Adrenal gland (tissue), 19 donors: ENCODE measurements at regions of chr9 and their contacts with region 1.

Region 1: GRCh38 chr9:105064315-105065097 is 136.6 kb upstream of the ABCA1 start:
- DNase-seq: peak; percentile 92 to 99 (median 97)
- H3K4me3 ChIP-seq: peak overlapping the region in 1 of 4 donors; percentile 5
- H3K27ac ChIP-seq: peak overlapping the region; percentile 77 to 98 (median 94)
- H3K4me1 ChIP-seq: peaks cover 24 to 27% of the 10 kb centered on the region in 2 donors
- H3K27me3 ChIP-seq: no peaks in the 10 kb centered on the region
- CTCF ChIP-seq: peak in 2 of 6 experiments; percentile 8 to 29
- POLR2A ChIP-seq: peak; percentile 48 to 93

Region 2: DNA sequence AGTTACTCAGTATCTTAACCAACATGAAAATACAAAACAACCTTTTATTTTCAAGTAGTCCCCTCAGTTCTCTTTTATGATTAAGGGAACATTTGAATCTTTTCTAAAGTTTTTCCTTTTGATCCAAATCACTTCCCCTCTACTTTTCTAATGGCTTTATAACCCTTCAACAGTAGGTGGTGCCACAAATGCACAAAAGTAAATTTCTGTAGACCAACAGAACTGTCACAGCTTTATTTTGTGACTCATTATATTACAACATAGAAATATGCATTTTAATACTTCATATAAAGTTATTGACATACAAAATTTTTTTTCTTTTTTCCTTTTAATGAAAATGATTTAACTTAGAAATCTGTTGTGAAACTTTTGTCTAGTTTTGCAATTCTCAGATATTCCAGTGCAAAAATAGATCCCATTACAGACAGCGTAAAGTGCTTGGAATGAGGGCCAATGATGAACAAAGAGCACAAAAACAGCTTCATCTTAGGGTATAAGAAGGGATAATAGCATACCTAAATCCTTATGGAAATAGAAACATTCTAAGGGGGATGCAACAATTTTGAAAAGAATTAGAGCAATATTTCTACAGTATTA is 283.6 kb before region 1 on chr9:
- intact Hi-C with region 1: no loop called
- DNase-seq: peak in 1 of 7 donors; percentile 27
- H3K4me3 ChIP-seq: peak overlapping the region in 1 of 4 donors; percentile 10
- H3K27ac ChIP-seq: peak overlapping the region in 3 of 5 donors; percentile 7 to 71 (median 62)
- H3K4me1 ChIP-seq: peaks cover 23 to 55% of the 10 kb centered on the region in 2 donors
- H3K27me3 ChIP-seq: no peaks in the 10 kb centered on the region
- CTCF ChIP-seq: peak; percentile 16 to 59 (median 48)
- POLR2A ChIP-seq: no peak

Region 3: DNA sequence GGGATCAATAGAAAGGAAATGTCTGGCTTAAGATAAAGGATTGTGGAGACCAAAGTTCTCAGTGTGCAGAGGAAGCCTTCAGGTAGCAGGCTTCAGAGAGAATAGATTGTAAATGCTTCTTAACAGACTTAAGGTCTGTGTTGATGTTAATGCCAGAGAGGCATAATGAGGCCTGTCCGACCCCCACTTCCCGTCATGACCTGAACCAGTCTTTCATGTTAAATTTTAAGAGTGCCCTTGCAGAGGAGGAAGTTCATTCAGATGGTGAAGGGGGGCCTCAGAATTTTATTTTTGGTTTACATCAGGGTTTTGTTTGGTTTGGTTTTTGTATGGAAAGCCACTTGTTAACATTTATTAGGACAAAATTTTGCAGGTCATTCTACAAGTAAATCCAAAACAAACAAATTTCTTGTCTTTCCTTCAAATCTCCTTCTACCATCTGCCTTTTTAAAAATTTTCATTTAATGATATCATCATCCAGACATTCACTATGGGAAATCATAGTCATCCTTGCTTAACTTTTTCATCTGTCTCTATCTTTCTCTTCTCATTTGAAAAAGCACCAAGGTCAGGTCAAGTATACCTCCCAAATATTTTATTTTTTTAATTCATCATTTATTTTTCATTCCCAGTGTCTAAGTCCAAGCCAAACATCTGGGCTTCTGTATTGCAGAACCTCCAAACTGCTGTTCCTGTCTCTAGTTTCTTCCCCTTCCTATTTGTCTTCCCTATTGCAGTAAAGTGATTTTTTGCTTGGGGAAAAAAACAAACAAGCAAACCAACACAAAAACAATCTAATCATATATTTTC is 129.6 kb before region 1 on chr9:
- intact Hi-C with region 1: loop called in 1 of 2 experiments (anchors 10 kb)
- DNase-seq: no peak
- H3K4me3 ChIP-seq: no peak overlapping the region
- H3K27ac ChIP-seq: peak overlapping the region in 1 of 5 donors; percentile 16
- H3K4me1 ChIP-seq: peaks cover 9 to 24% of the 10 kb centered on the region in 2 donors
- H3K27me3 ChIP-seq: no peaks in the 10 kb centered on the region
- CTCF ChIP-seq: no peak
- POLR2A ChIP-seq: no peak

Region 4: GRCh38 chr9:104968025-104968982 is 96.2 kb before region 1 on chr9:
- intact Hi-C with region 1: no loop called
- DNase-seq: peak; percentile 89 to 97 (median 95)
- H3K4me3 ChIP-seq: peak overlapping the region; percentile 49 to 90 (median 64)
- H3K27ac ChIP-seq: peak overlapping the region; percentile 88 to 97 (median 96)
- H3K4me1 ChIP-seq: peaks cover 12 to 14% of the 10 kb centered on the region in 2 donors
- H3K27me3 ChIP-seq: no peaks in the 10 kb centered on the region
- CTCF ChIP-seq: no peak
- POLR2A ChIP-seq: peak; percentile 57 to 72

Region 5: GRCh38 chr9:105150991-105151685 is 86.6 kb after region 1 on chr9:
- intact Hi-C with region 1: loop called in 1 of 2 experiments (anchors 5 kb)
- DNase-seq: peak in 1 of 7 donors; percentile 6
- H3K4me3 ChIP-seq: no peak overlapping the region
- H3K27ac ChIP-seq: no peak overlapping the region
- H3K4me1 ChIP-seq: no peaks in the 10 kb centered on the region
- H3K27me3 ChIP-seq: no peaks in the 10 kb centered on the region
- CTCF ChIP-seq: no peak
- POLR2A ChIP-seq: no peak